ENCODE measurements at regions of chr22 and their contacts with region 1.

Region 1: DNA sequence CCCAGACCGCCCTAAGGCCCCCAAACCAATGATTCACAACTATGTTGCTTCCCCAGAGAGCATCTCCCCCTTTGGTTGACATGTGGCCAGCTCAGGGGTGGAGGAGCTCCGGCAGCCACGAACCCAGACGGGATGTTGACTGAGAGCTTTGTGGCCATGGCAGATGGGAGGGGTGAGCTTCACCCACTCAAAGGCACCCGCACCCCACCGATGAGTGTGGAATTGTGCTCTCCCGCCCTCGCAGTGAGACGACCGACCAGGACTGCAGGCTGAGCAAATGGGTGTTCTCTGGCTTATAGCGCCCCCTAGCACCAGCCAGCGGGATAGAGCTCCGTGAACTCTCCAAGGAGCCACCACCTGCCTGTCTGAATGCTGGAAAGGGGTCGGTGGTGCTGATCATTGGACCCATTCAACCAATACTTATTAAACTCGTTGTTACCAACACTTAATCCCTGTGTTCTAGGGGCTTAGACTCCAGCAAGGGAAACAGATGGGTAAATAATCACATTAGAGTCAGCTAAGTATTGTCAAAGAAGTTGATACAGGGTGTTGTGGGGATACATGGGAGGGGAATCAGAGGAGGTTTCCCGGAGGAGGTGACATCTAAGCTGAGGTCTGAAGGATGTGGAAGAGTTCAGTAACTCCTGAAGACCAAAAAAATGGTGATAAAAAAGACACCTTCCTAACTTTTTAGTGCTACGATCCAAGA is 4.5 kb upstream of the TIMP3 start:
- DNase-seq: peak; percentile 68 to 80 (median 73)
- ATAC-seq: peak; percentile 83
- H3K4me3 ChIP-seq: no peak overlapping the region
- H3K27ac ChIP-seq: no peak overlapping the region
- H3K4me1 ChIP-seq: peaks cover 0 to 14% of the 10 kb centered on the region in 2 donors
- H3K27me3 ChIP-seq: peaks cover 5 to 30% of the 10 kb centered on the region in 2 donors
- CTCF ChIP-seq: peak; percentile 85 to 91

Region 2: DNA sequence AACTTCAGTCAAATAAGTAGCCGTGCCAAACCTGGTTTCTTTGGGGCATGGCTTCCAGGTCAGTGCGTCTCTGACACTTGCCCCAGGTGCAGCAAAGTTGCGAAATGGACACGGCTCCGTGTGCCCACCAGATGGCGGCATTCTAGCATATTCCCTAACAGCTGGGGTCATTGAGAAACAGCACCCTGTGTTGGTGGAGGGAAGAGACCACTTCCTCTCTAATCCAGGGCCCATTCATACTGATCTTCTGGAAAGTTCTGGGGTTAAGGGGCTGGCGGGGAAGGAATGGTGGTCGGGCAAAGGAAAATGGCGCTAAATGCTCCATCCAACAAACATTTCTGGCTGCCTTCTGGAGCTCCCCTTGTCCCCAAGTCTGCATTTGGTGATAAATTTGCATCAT is 136.7 kb before region 1 on chr22:
- intact Hi-C with region 1: loop called in 1 of 2 experiments (anchors 5 kb)
- DNase-seq: peak in 3 of 4 donors; percentile 63 to 82 (median 70)
- ATAC-seq: peak; percentile 93
- H3K4me3 ChIP-seq: no peak overlapping the region
- H3K27ac ChIP-seq: no peak overlapping the region
- H3K4me1 ChIP-seq: no peaks in the 10 kb centered on the region
- H3K27me3 ChIP-seq: no peaks in the 10 kb centered on the region
- CTCF ChIP-seq: peak; percentile 50 to 73

Region 3: DNA sequence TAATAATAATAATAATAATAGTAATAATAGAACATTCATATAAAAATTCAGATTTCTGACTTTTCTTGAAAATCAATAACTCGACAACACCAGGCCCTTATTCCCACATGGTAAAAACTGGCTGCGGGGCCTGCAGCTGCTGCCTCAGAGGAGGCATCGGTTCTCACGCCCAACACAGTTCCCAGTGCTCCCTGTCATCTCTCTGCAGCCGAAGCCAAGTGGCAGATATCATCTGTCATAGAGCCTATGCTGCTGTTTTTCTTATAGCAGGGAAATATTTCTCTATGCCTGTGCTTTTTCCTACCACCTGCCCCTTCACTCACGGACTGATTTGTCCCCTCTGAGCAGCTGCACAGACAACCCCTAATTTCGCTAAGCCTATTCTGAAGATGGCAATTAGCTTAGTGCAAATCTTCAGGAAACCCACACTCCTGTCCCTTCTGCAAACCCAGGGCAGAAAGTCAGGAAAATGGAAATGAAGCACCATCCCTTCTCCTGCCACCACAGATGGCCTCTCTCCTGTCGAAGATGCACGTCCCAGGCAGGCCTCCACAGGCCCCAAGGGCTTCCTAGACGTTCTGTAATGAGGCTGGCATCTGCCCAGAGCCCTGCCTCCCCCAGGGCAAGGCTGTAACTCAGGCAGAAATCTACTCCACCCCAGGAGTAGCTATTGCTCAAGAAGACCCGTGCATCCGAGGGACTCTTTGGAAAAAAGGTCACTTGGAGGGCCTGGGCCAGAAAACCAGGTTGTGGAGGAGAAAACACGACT is 194.5 kb after region 1 on chr22:
- intact Hi-C with region 1: loop called in 1 of 2 experiments (anchors 10 kb)
- DNase-seq: no peak
- ATAC-seq: peak; percentile 59
- H3K4me3 ChIP-seq: no peak overlapping the region
- H3K27ac ChIP-seq: no peak overlapping the region
- H3K4me1 ChIP-seq: peaks cover 3 to 8% of the 10 kb centered on the region in 2 donors
- H3K27me3 ChIP-seq: no peaks in the 10 kb centered on the region
- CTCF ChIP-seq: no peak

Measured in left lung (tissue), 14 donors.